ENCODE measurements at regions of chr10 and their contacts with region 1.

Region 1: DNA sequence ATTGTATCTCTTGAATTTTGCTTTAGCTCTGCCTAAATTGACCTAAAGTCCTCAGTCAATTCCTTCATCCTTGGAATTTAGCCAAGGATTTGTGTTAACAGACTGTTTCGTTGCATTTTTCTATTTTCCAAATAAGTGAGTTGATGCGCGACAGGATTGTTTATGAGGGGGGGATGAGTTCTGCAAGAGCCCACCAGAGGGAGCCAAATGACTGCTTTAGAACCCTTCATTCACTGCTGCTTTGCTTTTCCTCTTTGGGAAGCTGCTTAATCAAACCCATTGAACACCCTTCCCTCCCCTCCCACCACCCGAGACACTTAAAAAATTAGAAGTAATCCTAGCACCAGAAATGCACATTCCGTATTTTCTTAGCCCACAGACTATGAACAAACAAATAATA is 33.7 kb upstream of the PTF1A start:
- DNase-seq: no peak
- ATAC-seq: peak; percentile 67 to 80 (median 70)
- H3K4me3 ChIP-seq: no peak overlapping the region
- H3K27ac ChIP-seq: no peak overlapping the region
- H3K4me1 ChIP-seq: peaks cover 3% of the 10 kb centered on the region
- H3K27me3 ChIP-seq: peaks cover 0 to 13% (median 0%) of the 10 kb centered on the region in 3 donors
- CTCF ChIP-seq: peak; percentile 75

Region 2: DNA sequence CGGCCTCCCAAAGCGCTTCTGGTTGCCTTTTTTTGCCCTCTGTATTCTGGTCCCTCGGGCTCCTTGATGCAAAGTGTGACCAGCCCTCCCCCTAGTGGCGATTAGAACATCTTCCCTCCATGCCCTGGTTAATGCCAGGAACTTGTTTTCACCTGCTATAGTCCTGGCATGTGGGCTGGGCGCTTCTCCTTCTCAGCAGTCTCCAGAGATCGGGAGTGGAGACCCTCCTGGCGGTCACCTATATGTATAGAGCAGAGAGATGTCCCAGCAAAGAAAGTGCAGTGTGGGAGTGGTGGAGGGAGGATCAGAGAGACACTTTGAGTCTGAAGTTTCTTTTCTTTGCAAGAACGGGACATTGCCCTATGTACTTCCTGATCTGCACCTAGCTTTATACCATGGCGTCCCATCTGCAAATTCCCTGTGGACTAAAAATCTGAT is 544.6 kb after region 1 on chr10:
- intact Hi-C with region 1: loop called in 1 of 2 experiments (anchors 2 kb)
- DNase-seq: peak in 1 of 2 donors; percentile 16
- ATAC-seq: peak; percentile 53 to 69 (median 64)
- H3K4me3 ChIP-seq: no peak overlapping the region
- H3K27ac ChIP-seq: no peak overlapping the region
- H3K4me1 ChIP-seq: no peaks in the 10 kb centered on the region
- H3K27me3 ChIP-seq: no peaks in the 10 kb centered on the region
- CTCF ChIP-seq: peak; percentile 68

Region 3: DNA sequence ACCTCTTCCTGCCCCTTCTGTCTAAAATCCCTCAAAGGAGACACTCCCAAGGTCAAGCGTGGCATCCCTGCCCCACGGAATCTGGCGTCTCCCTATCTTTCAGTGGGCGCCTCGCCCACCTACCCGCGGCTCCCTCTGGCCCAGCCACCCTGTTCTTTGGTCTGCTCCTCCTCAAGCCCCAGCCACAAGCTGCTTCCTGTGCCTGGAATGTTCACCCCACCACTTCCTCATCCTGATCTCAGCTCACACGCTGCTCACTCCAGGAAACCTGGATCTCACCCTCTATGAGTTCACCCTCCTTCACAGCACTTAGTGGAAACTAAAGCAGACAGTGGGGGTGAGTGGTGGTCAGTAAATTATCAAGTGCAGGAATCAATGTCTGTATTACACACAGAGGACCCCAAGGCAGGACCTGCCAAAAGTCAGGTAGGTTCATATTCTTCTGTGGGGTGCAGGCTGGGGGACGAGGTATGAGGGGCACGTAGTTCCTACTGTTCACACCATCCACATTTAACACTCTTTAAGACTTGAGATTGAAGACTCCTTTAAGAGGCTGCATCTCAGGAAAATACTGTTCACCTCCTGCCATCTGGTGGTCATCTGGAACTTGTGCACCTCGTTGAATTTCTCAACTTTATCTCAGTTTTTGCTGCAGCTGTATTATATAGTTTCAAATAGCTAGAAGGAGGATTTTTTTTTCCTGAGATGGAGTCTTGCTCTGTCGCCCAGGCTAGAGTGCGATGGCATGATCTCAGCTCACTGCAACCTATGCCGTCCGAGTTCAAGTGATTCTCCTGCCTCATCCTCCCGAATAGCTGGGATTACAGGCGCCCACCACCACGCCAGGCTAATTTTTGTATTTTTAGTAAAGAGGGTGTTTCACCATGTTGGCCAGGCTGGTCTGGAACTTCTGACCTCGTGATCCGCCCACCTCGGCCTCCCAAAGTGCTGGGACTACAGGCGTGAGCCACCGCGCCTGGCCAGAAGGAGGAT is 1398.7 kb after region 1 on chr10:
- intact Hi-C with region 1: loop called (anchors 5 to 10 kb)
- DNase-seq: no peak
- ATAC-seq: peak in 3 of 4 donors; percentile 51 to 58 (median 54)
- H3K4me3 ChIP-seq: no peak overlapping the region
- H3K27ac ChIP-seq: no peak overlapping the region
- H3K4me1 ChIP-seq: peaks cover 22% of the 10 kb centered on the region
- H3K27me3 ChIP-seq: no peaks in the 10 kb centered on the region
- CTCF ChIP-seq: peak; percentile 78